RWPE1 (cell line): ENCODE measurements at regions of chr14 and their contacts with region 1.

Region 1: DNA sequence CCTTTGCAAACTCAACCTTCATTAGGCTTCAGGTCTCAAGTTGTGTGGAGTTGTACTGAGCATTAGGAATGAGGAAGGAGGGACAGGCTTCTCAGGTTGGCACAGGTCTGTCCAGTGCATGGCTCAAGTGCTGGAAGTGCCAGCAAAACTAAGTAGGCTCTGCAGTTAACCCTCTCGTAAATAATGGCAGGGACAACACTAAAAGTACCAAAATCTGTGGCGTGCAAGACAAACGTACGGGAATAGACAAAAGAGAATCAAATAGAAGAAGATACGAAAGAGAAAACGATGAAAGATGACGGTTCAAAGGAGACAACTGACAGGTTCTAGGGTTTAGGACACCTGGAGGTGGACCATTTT is 612 bp downstream of the TRAPPC6B start:
- DNase-seq: no peak
- H3K27ac ChIP-seq: peak overlapping the region; percentile 97
- CTCF ChIP-seq: no peak

Region 2: DNA sequence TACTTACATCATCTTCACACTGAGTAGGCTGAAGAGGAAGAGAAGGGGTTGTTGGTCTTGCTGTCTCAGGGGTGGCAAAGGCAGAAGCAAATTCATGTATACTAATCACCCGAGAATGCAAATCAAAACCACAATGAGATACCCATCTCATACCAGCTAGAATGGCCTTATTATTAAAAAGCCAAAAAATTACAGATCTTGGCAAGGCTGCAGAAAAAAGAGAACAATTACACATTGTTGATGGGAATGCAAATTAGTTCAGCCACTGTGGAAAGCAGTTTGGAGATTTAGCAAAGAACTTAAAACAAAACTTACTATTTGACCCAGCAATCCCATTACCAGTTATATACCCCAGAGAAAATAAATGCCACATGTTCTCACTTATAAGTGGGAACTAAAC is 221.3 kb before region 1 on chr14:
- CTCF ChIA-PET with region 1: no interaction called
- POLR2A ChIA-PET with region 1: no interaction called
- DNase-seq: no peak
- H3K27ac ChIP-seq: no peak overlapping the region
- CTCF ChIP-seq: no peak

Region 3: DNA sequence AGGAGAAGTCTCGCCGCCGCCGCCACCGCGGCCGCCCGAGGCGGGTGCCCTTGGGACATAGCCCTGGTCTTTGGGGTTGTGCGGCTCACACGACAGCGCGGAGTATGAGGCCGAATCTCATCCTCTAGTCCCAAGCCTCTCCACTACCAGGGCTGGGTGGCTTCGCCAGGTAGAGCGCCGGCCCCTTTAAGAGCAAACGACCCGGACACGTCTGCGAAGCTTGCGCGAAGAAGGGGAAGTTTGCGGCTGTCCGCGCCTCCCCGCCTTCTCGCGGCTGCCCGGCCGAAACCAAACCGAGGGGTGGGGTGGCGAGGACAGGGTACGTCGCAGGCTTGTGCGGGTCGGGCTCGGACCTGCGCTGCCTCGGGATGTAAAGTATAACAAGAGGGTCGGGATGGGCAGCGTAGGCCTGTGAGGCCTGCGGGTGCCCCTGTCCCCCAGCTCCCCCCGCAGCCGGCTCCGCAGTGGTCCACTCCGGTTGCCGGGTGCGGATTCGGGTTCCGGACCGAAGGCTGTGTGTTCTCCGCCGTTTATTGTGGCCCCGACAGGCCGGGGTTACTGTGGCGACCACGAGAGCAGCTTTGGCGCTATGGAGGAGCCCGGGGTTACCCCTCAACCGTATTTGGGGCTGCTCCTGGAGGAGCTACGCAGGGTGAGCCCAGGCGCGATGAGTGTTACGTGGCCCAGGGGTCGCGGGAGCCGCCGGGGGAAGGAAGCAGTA is 97.5 kb after region 1 on chr14:
- CTCF ChIA-PET with region 1: interaction called, 9 read pairs
- POLR2A ChIA-PET with region 1: interaction called, 21 read pairs
- DNase-seq: peak; percentile 68
- H3K27ac ChIP-seq: peak overlapping the region; percentile 95
- CTCF ChIP-seq: no peak